Posterior cingulate gyrus (tissue), 11 donors: ENCODE measurements at regions of chr1 and their contacts with region 1.

Region 1: DNA sequence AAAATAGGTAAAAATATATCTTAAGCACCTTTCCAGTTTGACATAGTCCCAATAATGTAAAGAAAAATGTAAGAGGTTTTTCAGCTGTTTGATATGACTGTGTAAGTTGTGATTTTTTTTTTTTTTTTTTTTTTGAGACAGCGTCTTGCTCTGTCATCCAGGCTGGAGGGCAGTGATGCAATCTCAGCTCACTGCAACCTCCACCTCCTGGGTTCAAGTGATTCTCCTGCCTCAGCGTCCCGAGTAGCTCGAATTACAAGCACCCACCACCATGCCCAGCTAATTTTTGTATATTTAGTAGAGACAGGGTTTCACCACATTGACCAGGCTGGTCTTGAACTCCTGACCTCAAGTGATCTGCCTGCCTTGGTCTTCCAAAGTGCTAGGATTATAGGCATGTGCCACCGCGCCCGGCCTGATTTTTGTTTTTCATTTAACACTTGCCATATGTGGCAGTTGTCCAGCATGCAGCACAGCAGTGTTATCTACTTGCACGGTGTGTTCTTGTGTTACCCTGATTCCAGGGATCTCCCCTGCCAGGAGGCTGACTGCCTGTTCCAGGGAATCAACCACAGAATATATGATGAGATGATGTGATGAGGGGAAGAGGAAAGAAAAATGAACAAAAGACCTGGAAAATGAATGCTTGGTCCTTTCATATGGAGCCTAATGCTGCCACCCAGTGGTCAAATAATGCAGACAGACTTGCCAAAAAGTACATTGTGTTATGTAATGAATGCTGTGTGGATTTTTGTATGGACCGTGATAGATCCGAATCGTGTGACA is 79.0 kb downstream of the RAVER2 start:
- DNase-seq: peak in 7 of 10 donors; percentile 39 to 82 (median 60)

Region 2: GRCh38 chr1:64268653-64269557 is 555.0 kb before region 1 on chr1:
- intact Hi-C with region 1: loop called (anchors 1 kb)
- DNase-seq: peak in 7 of 10 donors; percentile 51 to 81 (median 67)

Region 3: GRCh38 chr1:64686828-64687724 is 136.8 kb before region 1 on chr1:
- intact Hi-C with region 1: loop called (anchors 2 kb)
- DNase-seq: peak in 2 of 10 donors; percentile 28

Region 4: DNA sequence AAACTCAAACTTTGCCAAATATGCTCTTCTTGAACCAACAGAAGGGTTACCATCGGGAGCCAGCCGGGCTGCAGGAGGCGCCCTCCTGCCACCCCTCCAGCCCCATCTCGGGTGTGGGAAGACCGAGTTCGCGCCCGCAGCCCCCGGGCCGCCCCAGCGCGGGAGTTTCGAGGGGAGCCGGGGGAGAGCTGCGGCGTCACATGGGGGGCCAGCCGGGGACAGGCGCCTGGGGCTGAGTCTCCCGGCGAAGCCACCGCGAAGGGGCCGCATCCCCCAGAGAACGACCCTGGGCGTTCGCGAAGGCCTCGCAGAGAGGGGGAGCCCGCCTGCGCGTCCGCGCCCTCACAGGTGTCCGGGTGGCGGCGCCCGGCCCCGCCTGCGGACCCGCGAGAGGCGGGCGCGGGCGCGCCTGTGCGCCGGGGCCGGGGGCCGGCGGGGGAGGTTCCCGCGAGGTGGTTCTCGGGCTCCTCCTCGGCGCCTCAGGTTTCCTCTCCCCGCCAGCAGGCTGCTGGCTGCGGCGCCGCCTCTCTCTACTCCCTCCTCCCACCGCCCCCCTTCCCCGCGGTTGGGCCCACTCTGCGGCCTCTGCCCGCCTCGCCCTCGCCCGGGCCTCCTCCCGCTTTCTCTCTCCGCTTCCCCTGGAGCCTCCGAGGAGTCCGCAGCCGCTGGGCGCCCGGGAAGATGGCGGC is 79.2 kb before region 1 on chr1 and contains the start of gene RAVER2:
- intact Hi-C with region 1: loop called (anchors 10 kb)
- DNase-seq: peak; percentile 32 to 92 (median 54)

Region 5: DNA sequence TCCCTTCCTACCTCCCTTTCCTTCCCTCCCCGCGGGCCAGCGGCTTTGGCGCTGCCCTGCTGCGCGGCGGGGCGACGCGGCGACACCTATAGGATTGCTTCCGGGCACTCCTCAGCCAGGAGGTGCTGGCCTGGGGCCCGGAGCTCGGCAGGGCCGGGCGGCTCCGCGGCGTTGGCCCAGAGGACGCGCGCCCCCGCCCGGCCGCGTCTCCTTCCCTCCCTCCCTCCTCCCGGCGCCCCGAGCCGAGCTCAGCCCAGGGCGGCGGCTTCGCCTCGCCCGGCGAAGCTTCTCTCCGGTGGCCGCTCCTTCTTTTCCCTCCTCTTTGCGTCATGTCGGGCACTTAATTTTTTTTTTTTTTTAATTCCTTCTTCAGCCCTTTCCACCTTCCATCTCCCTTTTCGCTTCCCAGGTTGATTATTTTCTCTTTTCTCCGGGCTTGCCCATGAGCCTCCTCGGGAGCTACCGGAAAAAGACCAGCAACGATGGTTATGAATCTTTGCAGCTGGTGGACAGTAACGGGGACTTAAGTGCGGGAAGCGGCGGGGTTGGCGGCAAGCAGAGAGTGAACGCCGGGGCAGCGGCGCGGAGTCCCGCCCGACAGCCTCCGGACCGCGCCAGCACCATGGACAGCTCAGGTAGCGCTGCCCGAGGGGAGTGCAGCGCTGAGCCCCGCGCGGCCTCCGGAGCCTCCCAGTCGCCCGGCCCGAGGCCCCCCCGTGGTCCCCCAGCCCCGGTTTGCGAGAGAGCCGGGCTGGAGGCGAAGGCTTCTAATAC is 485.6 kb after region 1 on chr1 and contains the start of gene DNAJC6:
- intact Hi-C with region 1: no loop called
- DNase-seq: peak; percentile 33 to 93 (median 62)